Heart right ventricle (tissue), 16 donors: ENCODE measurements at regions of chr16 and their contacts with region 1.

Region 1: GRCh38 chr16:29694384-29695195 is 15.6 kb downstream of the QPRT start:
- DNase-seq: no peak
- ATAC-seq: peak in 2 of 8 donors; percentile 20 to 38
- H3K4me3 ChIP-seq: no peak overlapping the region
- H3K27ac ChIP-seq: no peak overlapping the region
- H3K4me1 ChIP-seq: no peaks in the 10 kb centered on the region
- H3K27me3 ChIP-seq: no peaks in the 10 kb centered on the region
- CTCF ChIP-seq: no peak

Region 2: DNA sequence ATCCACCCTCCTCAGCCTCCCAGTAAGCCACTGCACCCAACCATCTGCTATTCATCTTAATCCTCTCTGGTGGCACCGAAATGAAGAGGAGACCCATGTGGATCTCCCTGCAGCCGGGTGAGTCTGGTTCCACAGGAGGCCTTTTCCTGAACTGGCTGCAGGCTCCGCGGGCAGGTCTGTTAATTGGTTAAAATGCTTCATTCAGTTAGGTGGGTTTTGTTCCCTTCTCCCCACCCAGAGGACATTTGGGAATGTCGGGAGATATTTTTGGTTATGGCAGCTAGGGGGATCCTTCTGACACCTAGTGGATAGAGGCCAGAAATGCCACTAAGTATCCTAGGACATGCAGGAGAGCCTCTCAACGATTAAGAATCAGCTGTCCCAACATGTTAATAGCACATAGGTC is 34.5 kb after region 1 on chr16:
- intact Hi-C with region 1: loop called in 1 of 10 experiments (anchors 5 kb)
- DNase-seq: peak in 1 of 2 donors; percentile 14
- ATAC-seq: peak in 6 of 8 donors; percentile 41 to 67 (median 56)
- H3K4me3 ChIP-seq: peak overlapping the region in 1 of 10 donors; percentile 19
- H3K27ac ChIP-seq: no peak overlapping the region
- H3K4me1 ChIP-seq: peaks cover 0 to 8% (median 0%) of the 10 kb centered on the region in 9 donors
- H3K27me3 ChIP-seq: peaks cover 0 to 7% (median 0%) of the 10 kb centered on the region in 7 donors
- CTCF ChIP-seq: peak; percentile 15 to 65 (median 57)

Region 3: GRCh38 chr16:29848420-29849297 is 154.1 kb after region 1 on chr16:
- intact Hi-C with region 1: loop called in 3 of 10 experiments (anchors 10 kb)
- DNase-seq: peak; percentile 68 to 86
- ATAC-seq: peak; percentile 70 to 82 (median 76)
- H3K4me3 ChIP-seq: no peak overlapping the region
- H3K27ac ChIP-seq: peak overlapping the region in 1 of 10 donors; percentile 16
- H3K4me1 ChIP-seq: peaks cover 0 to 20% (median 0%) of the 10 kb centered on the region in 9 donors
- H3K27me3 ChIP-seq: no peaks in the 10 kb centered on the region
- CTCF ChIP-seq: peak; percentile 86 to 96 (median 91)

Region 4: GRCh38 chr16:30010844-30011713 is 316.5 kb after region 1 on chr16 and contains the start of gene DOC2A:
- intact Hi-C with region 1: loop called in 1 of 10 experiments (anchors 10 kb)
- DNase-seq: no peak
- ATAC-seq: no peak
- H3K4me3 ChIP-seq: peak within 1 kb of the TSS in 9 of 10 donors; percentile 23 to 54 (median 43)
- H3K27ac ChIP-seq: no peak within 1 kb of the TSS
- H3K4me1 ChIP-seq: peaks cover 3 to 24% (median 18%) of the 10 kb centered on the region in 9 donors
- H3K27me3 ChIP-seq: peaks cover 19 to 52% (median 46%) of the 10 kb centered on the region in 7 donors
- CTCF ChIP-seq: no peak
- total RNA-seq, gene DOC2A: 0.27 to 0.95 (median 0.48) TPM in 4 of 10 donors, not detected in the others

Region 5: GRCh38 chr16:30028438-30029076 is 334.0 kb after region 1 on chr16:
- intact Hi-C with region 1: loop called in 6 of 10 experiments (anchors 5 to 10 kb)
- DNase-seq: no peak
- ATAC-seq: peak in 4 of 8 donors; percentile 37 to 65 (median 54)
- H3K4me3 ChIP-seq: no peak overlapping the region
- H3K27ac ChIP-seq: no peak overlapping the region
- H3K4me1 ChIP-seq: peaks cover 0 to 10% (median 6%) of the 10 kb centered on the region in 9 donors
- H3K27me3 ChIP-seq: peaks cover 4 to 83% (median 74%) of the 10 kb centered on the region in 7 donors
- CTCF ChIP-seq: no peak